Mammary epithelial cell (primary cell): ENCODE measurements at regions of chr12 and their contacts with region 1.

Region 1: DNA sequence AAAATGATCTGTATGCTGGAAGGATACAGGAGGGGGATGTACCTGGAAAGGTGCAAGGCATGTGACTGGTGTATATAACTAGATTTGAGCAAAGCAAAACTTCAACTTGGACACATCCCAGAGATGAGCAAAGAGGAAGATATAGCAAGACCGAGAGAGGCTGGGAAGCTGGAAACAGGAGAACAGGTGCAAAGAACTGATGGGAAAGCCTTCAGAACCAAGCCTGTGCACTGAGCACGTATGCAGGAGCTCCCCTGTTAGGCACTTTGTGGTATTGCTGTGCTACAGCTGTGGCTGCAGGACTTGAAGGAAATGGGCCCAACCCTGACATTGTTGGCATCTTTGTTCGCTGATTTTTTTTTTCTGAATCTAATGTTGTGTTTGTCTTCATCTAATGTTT is 120.7 kb upstream of the PWP1 start:
- DNase-seq: peak; percentile 23
- H3K4me3 ChIP-seq: no peak overlapping the region
- H3K27ac ChIP-seq: no peak overlapping the region
- H3K4me1 ChIP-seq: peaks cover 20% of the 10 kb centered on the region
- H3K27me3 ChIP-seq: no peaks in the 10 kb centered on the region
- CTCF ChIP-seq: peak; percentile 71 to 87

Region 2: GRCh38 chr12:107131832-107132616 is 432.9 kb before region 1 on chr12:
- CTCF ChIA-PET with region 1: no interaction called
- dilution Hi-C with region 1: no loop called
- in situ Hi-C with region 1: no loop called
- intact Hi-C with region 1: loop called (anchors 2 kb)
- DNase-seq: peak; percentile 53
- H3K4me3 ChIP-seq: no peak overlapping the region
- H3K27ac ChIP-seq: no peak overlapping the region
- H3K4me1 ChIP-seq: no peaks in the 10 kb centered on the region
- H3K27me3 ChIP-seq: no peaks in the 10 kb centered on the region
- CTCF ChIP-seq: peak; percentile 87 to 95

Region 3: DNA sequence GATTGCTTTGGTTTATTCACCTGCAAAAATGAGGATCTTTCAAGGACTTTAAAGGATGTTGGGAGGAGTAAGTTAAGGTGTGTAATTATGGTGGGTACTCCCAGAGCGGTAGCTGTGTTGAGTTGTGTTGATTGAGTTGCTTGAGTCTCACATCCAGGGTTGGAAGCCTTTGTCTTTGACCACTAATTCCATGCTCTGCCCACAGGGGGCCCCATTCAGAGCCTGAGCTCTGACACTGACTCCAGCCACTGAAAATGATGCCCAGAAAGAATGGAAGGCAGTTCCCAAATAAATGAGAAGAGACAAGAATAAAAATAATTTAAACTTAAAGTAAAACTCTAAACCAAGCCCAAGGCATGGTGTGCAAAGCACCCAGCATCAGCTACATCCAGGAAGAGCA is 116.7 kb before region 1 on chr12:
- CTCF ChIA-PET with region 1: no interaction called
- dilution Hi-C with region 1: no loop called
- in situ Hi-C with region 1: no loop called
- intact Hi-C with region 1: loop called (anchors 1 kb)
- DNase-seq: no peak
- H3K4me3 ChIP-seq: no peak overlapping the region
- H3K27ac ChIP-seq: no peak overlapping the region
- H3K4me1 ChIP-seq: peaks cover 25% of the 10 kb centered on the region
- H3K27me3 ChIP-seq: no peaks in the 10 kb centered on the region
- CTCF ChIP-seq: peak; percentile 42 to 48